ENCODE measurements at regions of chr12 and their contacts with region 1.

Region 1: GRCh38 chr12:6873094-6874014 is at the start of gene SPSB2:
- DNase-seq: peak; percentile 98
- ATAC-seq: peak; percentile 89
- H3K4me3 ChIP-seq: peak within 1 kb of the TSS; percentile 69 to 92 (median 88)
- H3K4me3 Mint-ChIP-seq: peak within 1 kb of the TSS; percentile 90
- H3K27ac ChIP-seq: peak within 1 kb of the TSS; percentile 45 to 61
- H3K27ac Mint-ChIP-seq: peak within 1 kb of the TSS; percentile 93
- H3K4me1 ChIP-seq: peaks cover 29 to 40% of the 10 kb centered on the region in 2 donors
- H3K4me1 Mint-ChIP-seq: peaks cover 40% of the 10 kb centered on the region
- H3K27me3 ChIP-seq: no peaks in the 10 kb centered on the region
- H3K27me3 Mint-ChIP-seq: no peaks in the 10 kb centered on the region
- CTCF ChIP-seq: no peak
- total RNA-seq, gene SPSB2: 13.5 and 16.0 TPM in 2 replicates

Region 2: GRCh38 chr12:6723607-6724396 is 149.6 kb before region 1 on chr12 and contains the start of gene COPS7A:
- CTCF ChIA-PET with region 1: interaction called, 9 read pairs
- POLR2A ChIA-PET with region 1: interaction called, 6 read pairs
- intact Hi-C with region 1: loop called (anchors 1 kb)
- DNase-seq: peak; percentile 98
- ATAC-seq: peak; percentile 89
- H3K4me3 ChIP-seq: peak within 1 kb of the TSS; percentile 53 to 65 (median 63)
- H3K4me3 Mint-ChIP-seq: peak within 1 kb of the TSS; percentile 91
- H3K27ac ChIP-seq: peak within 1 kb of the TSS; percentile 81 to 86
- H3K27ac Mint-ChIP-seq: peak within 1 kb of the TSS; percentile 94
- H3K4me1 ChIP-seq: peaks cover 13 to 17% of the 10 kb centered on the region in 2 donors
- H3K4me1 Mint-ChIP-seq: peaks cover 19% of the 10 kb centered on the region
- H3K27me3 ChIP-seq: no peaks in the 10 kb centered on the region
- H3K27me3 Mint-ChIP-seq: no peaks in the 10 kb centered on the region
- CTCF ChIP-seq: no peak
- total RNA-seq, gene COPS7A: 28.3 and 29.4 TPM in 2 replicates

Region 3: GRCh38 chr12:6851921-6852650 is 21.3 kb before region 1 on chr12 and contains the start of gene USP5:
- CTCF ChIA-PET with region 1: interaction called, 136 read pairs
- POLR2A ChIA-PET with region 1: interaction called, 49 read pairs
- intact Hi-C with region 1: loop called (anchors 1 kb)
- DNase-seq: peak; percentile 100
- ATAC-seq: peak; percentile 76
- H3K4me3 ChIP-seq: peak within 1 kb of the TSS; percentile 85 to 98 (median 92)
- H3K4me3 Mint-ChIP-seq: peak within 1 kb of the TSS; percentile 92
- H3K27ac ChIP-seq: peak within 1 kb of the TSS; percentile 91
- H3K27ac Mint-ChIP-seq: peak within 1 kb of the TSS; percentile 93
- H3K4me1 ChIP-seq: peaks cover 6 to 23% of the 10 kb centered on the region in 2 donors
- H3K4me1 Mint-ChIP-seq: peaks cover 23% of the 10 kb centered on the region
- H3K27me3 ChIP-seq: no peaks in the 10 kb centered on the region
- H3K27me3 Mint-ChIP-seq: no peaks in the 10 kb centered on the region
- CTCF ChIP-seq: no peak
- total RNA-seq, gene USP5: 56.8 and 59.7 TPM in 2 replicates

Region 4: GRCh38 chr12:6904280-6905278 is 31.2 kb after region 1 on chr12 and contains the start of gene LRRC23:
- CTCF ChIA-PET with region 1: interaction called, 33 read pairs
- POLR2A ChIA-PET with region 1: interaction called, 8 read pairs
- intact Hi-C with region 1: loop called (anchors 1 kb)
- DNase-seq: peak; percentile 98
- ATAC-seq: peak; percentile 98
- H3K4me3 ChIP-seq: peak within 1 kb of the TSS; percentile 59 to 86 (median 74)
- H3K4me3 Mint-ChIP-seq: no peak within 1 kb of the TSS
- H3K27ac ChIP-seq: peak within 1 kb of the TSS; percentile 82 to 94
- H3K27ac Mint-ChIP-seq: no peak within 1 kb of the TSS
- H3K4me1 ChIP-seq: peaks cover 14 to 24% of the 10 kb centered on the region in 2 donors
- H3K4me1 Mint-ChIP-seq: peaks cover 6% of the 10 kb centered on the region
- H3K27me3 ChIP-seq: no peaks in the 10 kb centered on the region
- H3K27me3 Mint-ChIP-seq: no peaks in the 10 kb centered on the region
- CTCF ChIP-seq: no peak
- total RNA-seq, gene LRRC23: 14.4 and 15.5 TPM in 2 replicates

Region 5: GRCh38 chr12:6944381-6945186 is 71.2 kb after region 1 on chr12:
- CTCF ChIA-PET with region 1: interaction called, 27 read pairs
- POLR2A ChIA-PET with region 1: interaction called, 18 read pairs
- intact Hi-C with region 1: loop called (anchors 2 kb)
- DNase-seq: peak; percentile 91
- ATAC-seq: peak; percentile 46
- H3K4me3 ChIP-seq: peak overlapping the region; percentile 25 to 92 (median 80)
- H3K4me3 Mint-ChIP-seq: peak overlapping the region; percentile 97
- H3K27ac ChIP-seq: peak overlapping the region; percentile 93 to 99
- H3K27ac Mint-ChIP-seq: peak overlapping the region; percentile 97
- H3K4me1 ChIP-seq: peaks cover 56 to 73% of the 10 kb centered on the region in 2 donors
- H3K4me1 Mint-ChIP-seq: peaks cover 63% of the 10 kb centered on the region
- H3K27me3 ChIP-seq: no peaks in the 10 kb centered on the region
- H3K27me3 Mint-ChIP-seq: no peaks in the 10 kb centered on the region
- CTCF ChIP-seq: peak; percentile 90

Region 6: DNA sequence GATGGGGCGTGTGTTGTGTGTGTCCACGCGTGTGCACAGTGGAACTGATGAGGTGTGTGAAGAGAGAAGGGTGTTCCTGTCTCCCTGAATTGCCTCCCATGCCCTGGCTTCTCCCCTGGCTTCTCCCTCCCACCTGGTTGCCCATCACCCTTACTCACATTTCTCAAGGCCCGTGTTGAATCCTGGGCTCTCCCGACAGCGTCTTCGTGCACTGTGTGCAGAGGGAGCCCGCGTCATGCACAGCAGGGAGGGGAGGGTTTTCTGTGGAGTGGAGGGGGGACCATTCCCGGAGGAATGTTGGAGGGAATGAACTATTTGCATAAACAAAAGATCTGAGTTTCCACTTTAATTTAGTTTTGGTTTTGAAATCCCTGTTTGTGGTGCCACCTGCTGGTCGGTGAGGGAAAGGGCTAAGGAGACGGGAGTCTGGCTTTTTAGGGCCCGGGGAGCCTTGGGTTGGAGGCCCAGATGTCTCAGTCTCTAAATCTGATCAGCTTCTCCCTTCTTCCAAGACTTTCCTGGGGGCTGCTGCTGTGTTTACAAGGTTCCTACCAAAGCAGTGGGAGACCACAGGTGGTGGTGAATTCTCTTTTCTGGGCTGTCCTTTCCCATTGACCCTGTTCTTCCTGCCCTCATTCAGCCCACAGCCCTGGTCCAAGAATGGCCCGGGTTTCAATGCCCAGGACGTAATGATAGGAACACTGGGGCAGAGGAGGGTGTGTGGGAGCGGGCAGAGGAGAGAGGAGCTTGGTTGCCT is 219.1 kb after region 1 on chr12 and contains the start of gene C1R:
- CTCF ChIA-PET with region 1: interaction called, 6 read pairs
- POLR2A ChIA-PET with region 1: interaction called, 5 read pairs
- intact Hi-C with region 1: loop called (anchors 1 kb)
- DNase-seq: peak; percentile 74
- ATAC-seq: peak; percentile 78
- H3K4me3 ChIP-seq: peak within 1 kb of the TSS; percentile 15 to 61 (median 50)
- H3K4me3 Mint-ChIP-seq: peak within 1 kb of the TSS; percentile 90
- H3K27ac ChIP-seq: no peak within 1 kb of the TSS
- H3K27ac Mint-ChIP-seq: no peak within 1 kb of the TSS
- H3K4me1 ChIP-seq: peaks cover 0 to 12% of the 10 kb centered on the region in 2 donors
- H3K4me1 Mint-ChIP-seq: peaks cover 9% of the 10 kb centered on the region
- H3K27me3 ChIP-seq: peaks cover 0 to 3% (median 0%) of the 10 kb centered on the region in 4 experiments
- H3K27me3 Mint-ChIP-seq: peaks cover 4% of the 10 kb centered on the region
- CTCF ChIP-seq: peak; percentile 88
- total RNA-seq, gene C1R: 1.2 and 2.0 TPM in 2 replicates

Region 7: GRCh38 chr12:7144414-7145120 is 271.2 kb after region 1 on chr12:
- CTCF ChIA-PET with region 1: interaction called, 16 read pairs
- POLR2A ChIA-PET with region 1: no interaction called
- intact Hi-C with region 1: no loop called
- DNase-seq: peak; percentile 56
- ATAC-seq: no peak
- H3K4me3 ChIP-seq: no peak overlapping the region
- H3K4me3 Mint-ChIP-seq: no peak overlapping the region
- H3K27ac ChIP-seq: no peak overlapping the region
- H3K27ac Mint-ChIP-seq: no peak overlapping the region
- H3K4me1 ChIP-seq: no peaks in the 10 kb centered on the region
- H3K4me1 Mint-ChIP-seq: peaks cover 2% of the 10 kb centered on the region
- H3K27me3 ChIP-seq: no peaks in the 10 kb centered on the region
- H3K27me3 Mint-ChIP-seq: no peaks in the 10 kb centered on the region
- CTCF ChIP-seq: peak; percentile 79

Region 8: DNA sequence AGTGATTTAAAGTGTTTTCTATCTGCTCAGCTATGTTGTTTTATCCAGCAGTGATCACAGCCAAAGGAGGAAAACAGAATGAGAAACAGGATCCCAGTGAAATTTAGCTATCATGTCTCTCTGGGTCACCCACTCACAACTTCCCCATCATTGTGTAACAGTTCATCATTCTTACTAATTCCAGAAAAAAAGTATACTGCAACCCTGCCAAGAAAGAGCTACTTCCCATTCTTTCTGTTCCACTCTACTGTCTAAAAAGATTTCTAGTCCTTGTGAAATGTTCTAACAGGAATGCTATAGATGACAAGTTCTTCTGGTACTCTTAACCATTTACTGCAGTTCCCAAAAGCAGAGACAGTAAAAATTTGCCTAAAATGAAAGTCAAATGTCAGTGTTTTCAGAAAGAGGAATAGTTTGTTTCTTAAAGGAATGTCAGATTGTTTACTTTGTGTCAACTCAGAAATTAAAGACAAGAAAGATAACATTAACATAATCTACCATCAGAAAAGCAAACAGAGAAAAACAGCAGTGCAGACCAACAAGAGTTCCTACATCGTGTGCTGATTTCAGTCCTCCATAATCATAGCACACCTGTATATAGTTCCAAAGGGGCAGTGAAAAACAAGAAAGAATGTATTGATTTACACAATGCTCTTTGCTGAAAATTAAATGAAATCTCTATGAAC is 669.6 kb after region 1 on chr12:
- CTCF ChIA-PET with region 1: no interaction called
- POLR2A ChIA-PET with region 1: no interaction called
- intact Hi-C with region 1: no loop called
- DNase-seq: no peak
- ATAC-seq: no peak
- H3K4me3 ChIP-seq: no peak overlapping the region
- H3K4me3 Mint-ChIP-seq: no peak overlapping the region
- H3K27ac ChIP-seq: no peak overlapping the region
- H3K27ac Mint-ChIP-seq: no peak overlapping the region
- H3K4me1 ChIP-seq: no peaks in the 10 kb centered on the region
- H3K4me1 Mint-ChIP-seq: no peaks in the 10 kb centered on the region
- H3K27me3 ChIP-seq: peaks cover 0 to 2% (median 0%) of the 10 kb centered on the region in 4 experiments
- H3K27me3 Mint-ChIP-seq: peaks cover 36% of the 10 kb centered on the region
- CTCF ChIP-seq: no peak